Transverse colon (tissue), 4 donors: ENCODE measurements at regions of chr2 and their contacts with region 1.

Region 1: GRCh38 chr2:18545384-18545783 is 15.1 kb downstream of the RDH14 start:
- DNase-seq: no peak
- H3K4me3 ChIP-seq: no peak overlapping the region
- H3K27ac ChIP-seq: no peak overlapping the region
- H3K4me1 ChIP-seq: peaks cover 0 to 10% (median 0%) of the 10 kb centered on the region in 4 donors
- H3K27me3 ChIP-seq: no peaks in the 10 kb centered on the region
- CTCF ChIP-seq: no peak
- EP300 ChIP-seq: no peak
- POLR2A ChIP-seq: no peak

Region 2: DNA sequence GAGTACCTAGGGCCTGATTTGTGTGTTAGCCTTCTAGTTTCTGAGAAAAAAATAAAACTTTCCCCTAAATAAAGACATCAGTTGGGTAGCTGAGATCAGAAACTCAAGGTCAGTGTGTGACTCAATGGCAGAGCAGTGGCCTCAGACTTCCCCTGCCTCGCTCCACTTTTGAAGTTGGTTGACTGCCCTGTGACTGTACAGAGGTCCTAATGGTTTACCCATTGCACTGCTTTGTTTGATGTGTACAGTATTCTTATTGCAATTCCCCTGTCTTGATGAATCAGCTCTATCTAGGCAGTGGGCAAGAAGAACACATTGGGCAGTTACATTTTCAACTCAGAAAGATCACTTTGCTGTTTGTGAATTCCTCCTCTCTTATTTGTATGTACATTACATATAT is 351.2 kb before region 1 on chr2:
- in situ Hi-C with region 1: no loop called
- intact Hi-C with region 1: no loop called
- DNase-seq: no peak
- H3K4me3 ChIP-seq: no peak overlapping the region
- H3K27ac ChIP-seq: no peak overlapping the region
- H3K4me1 ChIP-seq: no peaks in the 10 kb centered on the region
- H3K27me3 ChIP-seq: no peaks in the 10 kb centered on the region
- CTCF ChIP-seq: no peak
- EP300 ChIP-seq: no peak
- POLR2A ChIP-seq: no peak

Region 3: DNA sequence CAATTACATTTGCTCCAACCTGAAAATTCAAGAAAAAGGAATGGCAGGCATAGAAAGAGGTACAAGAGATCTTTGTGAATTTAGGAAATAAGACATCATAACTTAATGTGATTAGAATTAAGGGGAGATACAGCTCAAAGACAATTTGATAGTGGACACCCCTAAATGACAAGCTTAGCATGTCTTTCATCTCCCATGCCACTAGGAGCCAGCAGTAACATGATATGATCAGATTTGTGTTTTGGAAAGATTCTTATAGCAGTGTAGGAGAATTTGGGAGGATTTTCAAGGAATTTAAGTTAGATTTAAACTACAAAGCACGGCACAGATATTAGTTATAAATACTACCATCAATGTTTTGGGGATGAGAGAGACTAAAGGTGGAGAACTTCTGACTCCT is 325.7 kb before region 1 on chr2:
- in situ Hi-C with region 1: no loop called
- intact Hi-C with region 1: no loop called
- DNase-seq: no peak
- H3K4me3 ChIP-seq: no peak overlapping the region
- H3K27ac ChIP-seq: no peak overlapping the region
- H3K4me1 ChIP-seq: no peaks in the 10 kb centered on the region
- H3K27me3 ChIP-seq: no peaks in the 10 kb centered on the region
- CTCF ChIP-seq: no peak
- EP300 ChIP-seq: no peak
- POLR2A ChIP-seq: no peak

Region 4: DNA sequence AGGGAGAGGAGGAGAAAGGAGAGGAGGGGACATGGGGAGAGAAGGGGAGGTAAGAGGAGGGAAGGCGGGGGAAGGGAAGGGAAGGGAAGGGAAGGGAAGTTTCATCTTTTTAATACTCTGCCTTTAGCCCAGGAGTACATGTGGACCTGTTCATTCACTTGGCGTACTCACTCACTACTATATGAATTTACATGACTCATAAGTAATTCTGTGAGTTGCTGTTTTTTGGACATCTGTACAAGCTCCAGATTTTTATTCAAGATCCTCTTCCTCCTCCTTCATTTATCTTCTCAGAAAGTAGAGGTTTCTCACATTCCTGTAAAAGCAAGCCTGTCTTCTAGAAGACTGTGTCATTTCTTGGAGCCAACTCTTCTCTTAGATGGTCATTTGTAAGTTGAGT is 69.5 kb before region 1 on chr2:
- in situ Hi-C with region 1: no loop called
- intact Hi-C with region 1: loop called (anchors 2 kb)
- DNase-seq: no peak
- H3K4me3 ChIP-seq: no peak overlapping the region
- H3K27ac ChIP-seq: no peak overlapping the region
- H3K4me1 ChIP-seq: peaks cover 0 to 7% (median 0%) of the 10 kb centered on the region in 4 donors
- H3K27me3 ChIP-seq: no peaks in the 10 kb centered on the region
- CTCF ChIP-seq: no peak
- EP300 ChIP-seq: no peak
- POLR2A ChIP-seq: no peak